Right cardiac atrium (tissue), 5 donors: ENCODE measurements at regions of chr18 and their contacts with region 1.

Region 1: DNA sequence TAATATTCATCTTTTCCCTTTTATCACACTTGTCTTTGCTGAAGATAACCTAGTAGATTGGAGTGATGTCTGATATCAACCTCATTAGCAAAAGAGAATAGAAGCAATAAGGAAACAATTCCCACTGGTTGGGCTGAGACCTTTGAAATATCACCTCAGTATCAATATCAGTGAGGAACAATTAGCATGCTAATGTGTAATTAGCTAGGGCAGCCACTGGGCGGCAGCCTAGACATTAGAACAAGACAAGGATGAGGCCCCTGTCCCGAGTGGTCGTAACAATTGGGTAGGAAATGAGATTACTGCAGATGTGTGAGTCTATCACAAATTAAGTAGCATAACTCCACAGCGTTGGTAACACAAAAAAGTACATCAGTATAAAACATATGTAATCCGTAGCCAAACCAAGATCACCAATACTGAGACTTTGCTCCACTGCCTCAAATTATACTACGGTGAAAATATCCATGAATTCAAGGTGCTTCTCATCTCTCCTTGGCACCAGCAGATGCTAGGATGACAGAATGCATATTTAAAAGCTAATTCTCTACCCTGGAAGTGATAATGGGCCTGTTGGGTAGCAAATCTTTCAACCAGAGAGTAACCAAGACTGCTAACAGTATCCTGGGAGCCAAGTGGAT is 99.1 kb downstream of the ALPK2 start:
- DNase-seq: peak; percentile 38 to 82 (median 71)
- ATAC-seq: peak; percentile 56 to 65
- H3K4me3 ChIP-seq: no peak overlapping the region
- H3K27ac ChIP-seq: no peak overlapping the region
- H3K4me1 ChIP-seq: no peaks in the 10 kb centered on the region
- H3K27me3 ChIP-seq: no peaks in the 10 kb centered on the region

Region 2: GRCh38 chr18:58590839-58591238 is 61.0 kb after region 1 on chr18:
- intact Hi-C with region 1: no loop called
- DNase-seq: no peak
- ATAC-seq: peak; percentile 18 to 58
- H3K4me3 ChIP-seq: no peak overlapping the region
- H3K27ac ChIP-seq: peak overlapping the region; percentile 80
- H3K4me1 ChIP-seq: peaks cover 7% of the 10 kb centered on the region
- H3K27me3 ChIP-seq: no peaks in the 10 kb centered on the region

Region 3: DNA sequence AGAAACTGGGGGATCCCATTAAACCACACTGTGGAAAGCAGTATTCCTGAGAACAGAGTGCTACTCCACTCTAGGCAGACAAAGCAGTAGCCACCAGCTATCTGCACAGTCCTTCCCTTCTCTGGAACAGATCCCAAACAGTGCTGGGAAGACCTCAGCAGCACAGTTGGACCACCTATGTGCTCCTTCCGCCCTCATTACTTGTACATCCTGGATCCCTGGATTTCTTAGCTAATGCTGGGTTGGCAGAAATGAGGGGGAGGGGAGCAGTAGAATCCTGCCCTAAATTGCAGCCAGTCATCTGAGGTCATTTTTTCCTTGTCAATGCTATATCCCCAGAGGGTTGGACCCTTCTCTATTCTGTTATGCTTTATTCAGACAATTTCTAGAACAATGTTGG is 127.7 kb after region 1 on chr18:
- intact Hi-C with region 1: loop called in 2 of 4 experiments (anchors 5 to 10 kb)
- DNase-seq: no peak
- ATAC-seq: no peak
- H3K4me3 ChIP-seq: no peak overlapping the region
- H3K27ac ChIP-seq: no peak overlapping the region
- H3K4me1 ChIP-seq: no peaks in the 10 kb centered on the region
- H3K27me3 ChIP-seq: no peaks in the 10 kb centered on the region

Region 4: DNA sequence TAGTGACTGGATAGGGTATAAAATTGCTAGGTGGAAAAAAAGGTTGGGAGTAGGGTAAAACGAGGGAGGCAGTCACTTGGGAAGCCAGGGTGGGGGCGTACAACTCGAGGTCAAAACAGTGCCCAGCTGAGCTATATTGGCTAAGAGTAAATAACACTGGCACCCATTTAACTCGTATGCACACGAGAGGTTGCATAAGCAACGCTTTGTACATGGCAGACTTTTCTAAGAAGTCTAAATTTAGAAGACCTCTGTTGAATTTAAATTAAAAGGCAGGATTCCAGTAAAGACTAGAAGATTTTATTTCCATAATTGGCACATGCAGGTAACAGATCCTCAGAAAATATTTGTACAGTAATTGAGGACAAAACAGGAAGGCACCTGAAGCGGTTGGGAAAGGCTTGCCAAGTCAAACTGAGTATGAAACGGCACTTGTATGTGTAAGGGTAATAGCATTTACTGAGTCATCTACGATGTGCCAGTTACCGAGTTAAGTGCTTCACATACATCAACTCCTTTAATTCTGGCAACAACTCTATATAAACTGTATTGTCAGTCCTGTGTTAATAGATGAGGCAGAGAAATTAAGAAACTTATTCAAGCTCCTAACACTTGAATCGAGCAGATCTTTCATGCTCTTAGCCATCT is 140.0 kb after region 1 on chr18:
- intact Hi-C with region 1: loop called in 1 of 4 experiments (anchors 10 kb)
- DNase-seq: no peak
- ATAC-seq: no peak
- H3K4me3 ChIP-seq: no peak overlapping the region
- H3K27ac ChIP-seq: no peak overlapping the region
- H3K4me1 ChIP-seq: no peaks in the 10 kb centered on the region
- H3K27me3 ChIP-seq: no peaks in the 10 kb centered on the region

Region 5: DNA sequence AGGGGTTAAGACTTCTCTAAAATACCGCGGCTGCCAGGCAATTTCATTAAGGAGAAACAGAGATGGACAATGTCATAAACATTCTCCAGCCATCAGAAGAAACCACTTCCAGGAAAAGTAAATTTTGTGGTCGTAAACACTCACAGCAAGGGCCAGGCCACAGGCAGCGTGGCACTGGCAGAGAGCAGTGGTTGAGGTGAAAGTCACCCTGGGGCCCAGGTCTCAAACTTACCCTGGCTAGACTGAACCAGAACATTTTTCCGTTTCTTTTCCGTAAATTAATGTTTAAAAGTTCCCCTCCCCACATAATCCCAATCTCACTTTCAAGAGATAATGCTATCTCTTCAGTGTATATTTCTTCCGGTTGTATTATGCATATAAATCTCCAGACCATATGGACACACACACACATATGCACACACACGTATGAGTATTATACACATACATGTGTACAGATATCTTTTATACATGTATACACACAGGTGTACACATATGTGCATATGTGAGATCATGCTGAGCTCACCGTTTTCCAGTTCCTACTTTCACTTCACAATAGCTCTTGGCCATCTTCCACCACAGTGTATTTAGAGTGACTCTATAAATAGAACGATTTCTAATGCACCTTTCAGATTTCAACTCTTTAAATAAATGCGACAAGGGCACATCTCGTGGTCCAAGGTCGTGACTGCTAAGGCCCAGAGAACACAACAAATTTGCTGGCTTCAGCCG is 231.6 kb after region 1 on chr18:
- intact Hi-C with region 1: loop called (anchors 2 to 10 kb)
- DNase-seq: no peak
- ATAC-seq: peak; percentile 15 to 20
- H3K4me3 ChIP-seq: no peak overlapping the region
- H3K27ac ChIP-seq: peak overlapping the region; percentile 60
- H3K4me1 ChIP-seq: no peaks in the 10 kb centered on the region
- H3K27me3 ChIP-seq: no peaks in the 10 kb centered on the region

Region 6: GRCh38 chr18:58768293-58768974 is 238.6 kb after region 1 on chr18:
- intact Hi-C with region 1: loop called (anchors 2 to 10 kb)
- DNase-seq: peak; percentile 67 to 90 (median 88)
- ATAC-seq: peak; percentile 89 to 93
- H3K4me3 ChIP-seq: no peak overlapping the region
- H3K27ac ChIP-seq: no peak overlapping the region
- H3K4me1 ChIP-seq: no peaks in the 10 kb centered on the region
- H3K27me3 ChIP-seq: no peaks in the 10 kb centered on the region

Region 7: GRCh38 chr18:59070181-59070912 is 540.5 kb after region 1 on chr18:
- intact Hi-C with region 1: loop called in 1 of 4 experiments (anchors 10 kb)
- DNase-seq: peak; percentile 85 to 95 (median 90)
- ATAC-seq: peak; percentile 83 to 87
- H3K4me3 ChIP-seq: no peak overlapping the region
- H3K27ac ChIP-seq: no peak overlapping the region
- H3K4me1 ChIP-seq: no peaks in the 10 kb centered on the region
- H3K27me3 ChIP-seq: no peaks in the 10 kb centered on the region